A673 (cell line): ENCODE measurements at regions of chr13 and their contacts with region 1.

Region 1: DNA sequence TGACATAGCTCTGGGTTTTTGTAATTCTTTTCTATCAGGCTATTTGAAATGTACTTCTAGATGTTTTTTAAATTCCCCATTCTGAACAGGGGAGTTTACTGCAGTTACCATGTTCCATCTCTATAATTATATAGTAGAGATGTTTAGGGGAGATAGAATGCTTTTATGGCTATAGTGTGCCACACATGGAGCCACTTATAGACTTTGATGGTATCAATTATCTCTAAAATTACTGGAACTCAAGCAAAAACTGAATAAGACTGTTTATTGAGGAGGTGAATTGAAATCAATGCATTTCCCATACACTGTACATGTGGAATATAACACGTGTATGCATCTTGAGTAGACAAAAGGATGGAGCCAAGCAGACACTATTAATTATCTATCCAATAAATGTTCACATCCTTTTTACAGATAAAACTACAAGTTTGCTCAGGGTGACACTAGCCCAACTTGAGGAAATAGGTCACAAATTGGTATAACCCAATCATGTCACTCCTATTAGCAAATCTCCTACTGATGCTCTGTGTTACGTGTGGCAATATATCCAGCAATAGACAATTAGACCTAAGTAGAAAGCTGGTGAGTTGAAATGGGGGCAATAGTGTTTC is 1882.6 kb downstream of the PCDH9 start:
- DNase-seq: no peak
- H3K4me3 ChIP-seq: no peak overlapping the region
- H3K27ac ChIP-seq: no peak overlapping the region
- H3K4me1 ChIP-seq: no peaks in the 10 kb centered on the region
- H3K27me3 ChIP-seq: no peaks in the 10 kb centered on the region
- CTCF ChIP-seq: no peak

Region 2: DNA sequence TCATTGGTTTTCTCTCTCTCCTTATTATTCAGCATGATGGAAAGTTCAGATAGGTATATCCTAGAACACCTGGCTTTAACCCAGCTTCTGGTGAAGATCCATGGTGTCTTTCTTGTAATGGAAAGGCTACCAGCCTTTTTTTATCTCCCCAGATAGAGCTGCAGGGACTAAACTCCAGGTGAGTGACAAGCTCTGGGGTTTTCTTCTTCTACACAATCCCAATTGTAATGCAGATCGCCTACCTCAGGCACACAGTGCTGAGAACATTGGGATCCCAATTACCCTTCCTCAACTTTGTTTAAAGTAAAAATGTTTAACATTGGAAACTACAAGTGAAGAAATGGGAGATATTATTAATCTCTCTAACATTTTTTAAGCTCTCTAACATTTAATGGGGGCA is 31.0 kb after region 1 on chr13:
- CTCF ChIA-PET with region 1: no interaction called
- POLR2A ChIA-PET with region 1: no interaction called
- intact Hi-C with region 1: loop called (anchors 1 kb)
- DNase-seq: no peak
- H3K4me3 ChIP-seq: no peak overlapping the region
- H3K27ac ChIP-seq: no peak overlapping the region
- H3K4me1 ChIP-seq: no peaks in the 10 kb centered on the region
- H3K27me3 ChIP-seq: no peaks in the 10 kb centered on the region
- CTCF ChIP-seq: no peak